K562 (cell line): ENCODE measurements at regions of chr7 and their contacts with region 1.

Region 1: DNA sequence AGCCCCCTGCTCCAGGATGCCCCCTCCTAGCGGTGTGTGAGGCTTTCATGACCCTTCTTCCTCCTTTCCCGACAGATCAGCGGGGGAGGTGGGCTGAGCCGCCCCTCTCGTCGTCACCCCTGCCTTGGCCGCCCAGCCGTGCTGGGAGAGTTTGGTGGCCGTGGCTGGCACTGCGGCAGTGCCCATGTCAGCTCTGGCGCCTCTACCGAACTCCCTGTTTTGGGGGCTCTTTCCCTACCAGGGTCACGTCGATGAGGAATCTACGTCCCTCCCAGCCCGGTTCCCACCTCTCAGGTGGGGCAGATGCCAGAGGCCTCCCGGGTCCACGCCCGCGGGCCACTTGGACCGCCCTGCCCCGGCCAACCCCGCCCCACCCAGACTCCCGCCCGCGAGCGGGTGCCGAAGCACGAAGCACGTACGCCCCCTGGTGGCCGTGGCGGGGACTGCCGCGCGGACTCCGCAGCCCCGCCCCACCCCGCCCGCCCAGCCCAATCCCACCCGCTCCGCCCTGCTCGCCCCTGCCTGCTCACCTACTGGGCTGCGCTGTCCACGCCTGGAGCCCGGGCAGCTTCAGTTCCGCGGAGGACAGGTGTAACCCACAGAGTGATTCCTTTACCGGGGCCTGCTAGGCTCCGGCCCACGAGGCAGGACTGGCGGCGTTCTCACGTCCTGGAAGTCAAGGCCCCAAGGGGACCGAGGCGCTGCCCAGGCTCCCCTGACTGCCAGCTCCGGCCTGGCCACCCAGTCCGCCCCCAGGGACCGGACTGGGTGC is 127.1 kb downstream of the UBE2H start:
- DNase-seq: peak; percentile 92 to 98 (median 94)
- ATAC-seq: peak; percentile 84
- H3K4me3 ChIP-seq: peak overlapping the region; percentile 47
- H3K27ac ChIP-seq: no peak overlapping the region; the same call in 2 of the 3 replicates
- H3K4me1 ChIP-seq: peaks cover 21 to 28% of the 10 kb centered on the region in 2 experiments; a peak in 4 of 5 replicates
- H3K27me3 ChIP-seq: 0 out of 5 replicates have a peak, but pooled peaks cover 0 to 5% of the 10 kb centered on the region in 2 experiments
- CTCF ChIP-seq: peak in 2 of 3 experiments; percentile 82 to 90; a peak in 5 of 6 replicates
- EP300 ChIP-seq: no peak
- POLR2A ChIP-seq: no peak
- RAD21 ChIP-seq: peak; percentile 75 to 80

Region 2: DNA sequence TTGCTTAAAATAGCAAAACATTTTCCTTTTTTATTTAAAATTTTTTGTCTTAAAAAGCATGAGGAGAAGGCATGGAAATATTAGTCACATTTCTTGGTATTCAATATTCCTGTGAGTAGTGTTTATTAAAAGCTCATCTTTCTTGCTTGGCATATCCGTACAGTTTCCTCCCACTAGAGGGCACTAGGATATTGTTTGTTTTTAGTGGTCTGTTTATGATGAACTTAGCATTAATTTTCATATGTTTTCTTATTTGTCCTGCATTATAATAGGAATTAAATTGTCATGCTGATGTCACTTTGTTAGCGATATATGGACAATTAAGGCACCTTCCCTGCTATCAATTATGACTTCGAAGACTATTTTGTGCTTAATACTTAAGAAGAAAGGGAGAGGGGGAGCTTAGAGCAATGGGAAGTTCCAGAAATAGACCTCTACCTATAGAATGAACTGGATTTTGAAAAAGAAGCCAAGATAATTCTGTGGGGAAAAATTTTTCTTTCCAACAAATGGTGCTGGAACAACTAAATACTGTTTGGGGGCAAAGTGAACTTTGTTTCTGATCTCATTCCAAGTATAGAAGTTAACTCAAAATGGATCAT is 482.5 kb before region 1 on chr7:
- CTCF ChIA-PET with region 1: interaction called, 6 read pairs
- POLR2A ChIA-PET with region 1: no interaction called
- in situ Hi-C with region 1: loop called (anchors 10 kb)
- intact Hi-C with region 1: loop called (anchors 5 kb)
- DNase-seq: peak; percentile 56 to 77 (median 60)
- ATAC-seq: peak; percentile 93
- H3K4me3 ChIP-seq: no peak overlapping the region
- H3K27ac ChIP-seq: no peak overlapping the region
- H3K4me1 ChIP-seq: peaks cover 0 to 9% of the 10 kb centered on the region in 2 experiments; a peak in 2 of 5 replicates
- H3K27me3 ChIP-seq: no peaks in the 10 kb centered on the region
- CTCF ChIP-seq: peak; percentile 68 to 96 (median 72); a peak in 5 of 6 replicates
- EP300 ChIP-seq: no peak
- POLR2A ChIP-seq: no peak
- RAD21 ChIP-seq: peak; percentile 86 to 88

Region 3: GRCh38 chr7:129468087-129468486 is 357.6 kb before region 1 on chr7:
- CTCF ChIA-PET with region 1: no interaction called
- POLR2A ChIA-PET with region 1: no interaction called
- in situ Hi-C with region 1: no loop called
- intact Hi-C with region 1: loop called (anchors 5 kb)
- DNase-seq: no peak
- ATAC-seq: no peak
- H3K4me3 ChIP-seq: no peak overlapping the region
- H3K27ac ChIP-seq: no peak overlapping the region
- H3K4me1 ChIP-seq: no peaks in the 10 kb centered on the region
- H3K27me3 ChIP-seq: no peaks in the 10 kb centered on the region
- CTCF ChIP-seq: no peak
- EP300 ChIP-seq: no peak
- POLR2A ChIP-seq: no peak
- RAD21 ChIP-seq: no peak

Region 4: GRCh38 chr7:129875745-129876411 is 50.2 kb after region 1 on chr7:
- CTCF ChIA-PET with region 1: no interaction called
- POLR2A ChIA-PET with region 1: interaction called, 4 read pairs
- in situ Hi-C with region 1: no loop called
- intact Hi-C with region 1: loop called (anchors 2 kb)
- DNase-seq: peak; percentile 78 to 85 (median 81)
- ATAC-seq: peak; percentile 78
- H3K4me3 ChIP-seq: peak overlapping the region; percentile 6; the same call in 1 of the 2 replicates
- H3K27ac ChIP-seq: peak overlapping the region; percentile 75
- H3K4me1 ChIP-seq: peaks cover 8 to 54% of the 10 kb centered on the region in 2 experiments; a peak in 4 of 5 replicates
- H3K27me3 ChIP-seq: no peaks in the 10 kb centered on the region
- CTCF ChIP-seq: no peak
- EP300 ChIP-seq: no peak; the same call in 1 of the 2 replicates
- POLR2A ChIP-seq: peak; percentile 46
- RAD21 ChIP-seq: no peak

Region 5: DNA sequence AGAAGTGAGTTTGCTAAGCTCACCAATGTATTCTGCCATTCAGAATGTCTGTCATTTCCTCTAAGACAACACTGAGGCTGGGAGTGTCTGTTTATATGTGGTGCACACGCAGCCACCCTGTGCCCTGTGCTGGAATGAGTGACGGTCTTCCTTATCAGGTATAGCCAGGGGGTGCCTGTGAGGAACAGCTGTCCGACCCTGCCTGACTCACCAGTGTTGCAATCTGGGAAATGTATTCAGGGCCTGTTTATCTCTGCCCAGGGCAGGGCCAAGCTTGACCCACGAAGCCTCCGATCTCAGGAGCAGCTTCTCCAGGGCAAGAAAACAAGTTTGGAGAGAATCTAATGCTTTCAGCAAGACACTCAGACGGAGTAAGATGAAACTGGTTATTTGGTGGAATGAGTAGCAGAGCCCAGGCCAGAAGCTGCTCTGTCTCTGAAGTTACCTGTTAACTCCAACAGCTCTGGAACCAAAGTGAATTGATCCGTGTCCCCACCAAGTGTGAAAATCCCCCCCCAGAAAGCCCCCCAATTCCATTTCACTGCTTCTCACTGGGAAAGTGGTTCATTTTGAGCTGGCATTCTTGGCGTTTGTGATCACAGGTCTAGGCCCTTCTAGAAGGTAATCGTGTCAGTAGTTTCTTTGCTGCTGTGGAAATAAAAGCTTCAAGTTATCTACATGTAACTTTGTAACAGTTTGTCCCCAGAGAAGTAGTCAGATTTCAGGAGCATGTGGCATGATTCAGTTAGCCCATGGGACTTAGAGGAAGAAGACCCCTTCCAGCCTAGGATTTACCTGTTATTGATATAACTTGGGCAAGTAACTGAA is 133.2 kb after region 1 on chr7:
- CTCF ChIA-PET with region 1: no interaction called
- POLR2A ChIA-PET with region 1: interaction called, 4 read pairs
- in situ Hi-C with region 1: no loop called
- intact Hi-C with region 1: loop called (anchors 2 kb)
- DNase-seq: peak; percentile 95 to 99 (median 97)
- ATAC-seq: peak; percentile 97
- H3K4me3 ChIP-seq: no peak overlapping the region
- H3K27ac ChIP-seq: peak overlapping the region; percentile 43; the same call in 2 of the 3 replicates
- H3K4me1 ChIP-seq: peaks cover 20 to 31% of the 10 kb centered on the region in 2 experiments
- H3K27me3 ChIP-seq: no peaks in the 10 kb centered on the region
- CTCF ChIP-seq: 0 out of 6 replicates have a peak, but pooled peaks of 2 of the 3 experiments have one; percentile 2 to 8
- EP300 ChIP-seq: peak; percentile 99
- POLR2A ChIP-seq: no peak
- RAD21 ChIP-seq: peak; percentile 28 to 57; a peak in 3 of 4 replicates

Region 6: DNA sequence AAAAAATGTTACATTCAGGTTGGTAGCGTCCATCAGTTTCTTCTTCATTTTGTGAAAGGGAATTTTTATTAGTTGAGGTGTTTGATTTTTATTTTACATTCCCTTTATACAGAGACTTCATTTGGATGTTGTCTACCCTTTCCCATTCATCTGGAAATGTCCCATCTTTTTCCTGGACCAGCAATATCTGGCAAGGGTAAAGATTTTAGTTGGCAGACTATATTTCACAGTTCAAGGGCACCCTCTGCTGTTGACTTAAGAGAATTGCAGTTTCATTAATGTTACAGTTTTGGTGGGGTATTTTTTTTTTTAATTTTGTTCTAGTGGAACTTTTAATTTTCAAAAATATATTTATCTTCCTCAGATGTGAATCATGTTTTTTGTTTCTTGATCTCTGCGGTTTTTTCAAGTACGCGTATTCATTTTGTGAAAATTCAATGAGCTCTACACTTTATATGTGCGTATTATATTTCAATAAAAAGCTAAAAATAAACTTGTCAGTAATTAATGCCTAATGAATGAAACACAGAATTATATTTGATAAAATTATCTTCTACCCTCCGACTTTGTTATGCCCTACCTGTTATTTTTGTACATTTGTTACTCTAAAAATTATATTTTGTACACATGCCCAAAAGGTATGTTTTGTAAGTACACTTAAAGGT is 1006.3 kb after region 1 on chr7:
- CTCF ChIA-PET with region 1: no interaction called
- POLR2A ChIA-PET with region 1: no interaction called
- in situ Hi-C with region 1: no loop called
- intact Hi-C with region 1: loop called (anchors 2 kb)
- DNase-seq: peak; percentile 64 to 65 (median 64)
- ATAC-seq: peak; percentile 64
- H3K4me3 ChIP-seq: no peak overlapping the region
- H3K27ac ChIP-seq: no peak overlapping the region
- H3K4me1 ChIP-seq: no peaks in the 10 kb centered on the region
- H3K27me3 ChIP-seq: peaks cover 8 to 18% of the 10 kb centered on the region in 2 experiments; a peak in 4 of 5 replicates
- CTCF ChIP-seq: peak; percentile 71 to 92 (median 79); a peak in 5 of 6 replicates
- EP300 ChIP-seq: no peak
- POLR2A ChIP-seq: no peak
- RAD21 ChIP-seq: peak; percentile 81 to 83